Activated T-helper 1 cell treated with anti-CD3 and anti-CD28 coated beads, Interleukin-12 subunit alpha, Interleukin-12 subunit beta, Interleukin-2, Interleukin-4 antibody, amounts not matched to agents 30 ng/mL and 10 ng/mL and 1 ng/mL, durations not matched to agents 14 hours and 24 hours and 36 hours (primary cell): ENCODE measurements at regions of chr11 and their contacts with region 1.

Region 1: DNA sequence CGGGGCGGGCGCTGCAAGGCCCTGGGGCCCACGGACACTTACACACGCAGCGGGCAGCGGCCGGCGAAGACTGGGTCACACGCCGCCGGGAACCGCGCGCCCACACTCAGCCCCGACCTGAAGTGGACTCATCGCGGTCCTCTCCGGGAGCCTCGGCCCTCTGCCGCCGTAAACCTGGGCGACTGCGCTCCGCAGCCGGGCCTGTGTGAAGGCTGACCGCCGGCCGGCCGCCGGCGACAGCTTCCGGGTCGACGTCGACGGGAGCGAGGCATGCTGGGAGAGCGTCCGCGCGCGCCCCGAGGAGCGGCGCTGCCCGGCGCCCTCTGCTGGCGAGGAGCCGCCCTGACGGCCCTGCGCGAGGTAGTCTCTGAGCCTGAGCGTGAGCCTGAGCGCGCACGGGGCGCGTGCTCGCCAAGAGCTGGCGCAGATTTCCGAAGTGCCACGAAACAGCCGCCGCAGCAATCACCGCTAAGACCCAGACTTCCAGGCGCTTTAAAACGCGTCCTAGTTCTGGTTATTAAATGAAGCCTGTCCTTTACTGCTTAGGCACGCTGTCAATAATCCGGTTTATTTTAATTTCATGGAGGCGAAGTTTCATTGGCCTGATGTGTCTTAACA is at the start of gene SNX19:
- DNase-seq: peak; percentile 90
- H3K4me3 Mint-ChIP-seq: peak within 1 kb of the TSS; percentile 87
- H3K27ac Mint-ChIP-seq: peak within 1 kb of the TSS; percentile 63
- H3K4me1 Mint-ChIP-seq: peaks cover 33% of the 10 kb centered on the region
- H3K27me3 Mint-ChIP-seq: peaks cover 8% of the 10 kb centered on the region
- total RNA-seq, gene SNX19: 58.5 and 60.7 TPM in 2 replicates

Region 2: GRCh38 chr11:129279326-129280026 is 1636.9 kb before region 1 on chr11:
- intact Hi-C with region 1: loop called (anchors 2 kb)
- DNase-seq: peak; percentile 74
- H3K4me3 Mint-ChIP-seq: peak overlapping the region; percentile 79
- H3K27ac Mint-ChIP-seq: peak overlapping the region; percentile 81
- H3K4me1 Mint-ChIP-seq: peaks cover 40% of the 10 kb centered on the region
- H3K27me3 Mint-ChIP-seq: peaks cover 29% of the 10 kb centered on the region

Region 3: DNA sequence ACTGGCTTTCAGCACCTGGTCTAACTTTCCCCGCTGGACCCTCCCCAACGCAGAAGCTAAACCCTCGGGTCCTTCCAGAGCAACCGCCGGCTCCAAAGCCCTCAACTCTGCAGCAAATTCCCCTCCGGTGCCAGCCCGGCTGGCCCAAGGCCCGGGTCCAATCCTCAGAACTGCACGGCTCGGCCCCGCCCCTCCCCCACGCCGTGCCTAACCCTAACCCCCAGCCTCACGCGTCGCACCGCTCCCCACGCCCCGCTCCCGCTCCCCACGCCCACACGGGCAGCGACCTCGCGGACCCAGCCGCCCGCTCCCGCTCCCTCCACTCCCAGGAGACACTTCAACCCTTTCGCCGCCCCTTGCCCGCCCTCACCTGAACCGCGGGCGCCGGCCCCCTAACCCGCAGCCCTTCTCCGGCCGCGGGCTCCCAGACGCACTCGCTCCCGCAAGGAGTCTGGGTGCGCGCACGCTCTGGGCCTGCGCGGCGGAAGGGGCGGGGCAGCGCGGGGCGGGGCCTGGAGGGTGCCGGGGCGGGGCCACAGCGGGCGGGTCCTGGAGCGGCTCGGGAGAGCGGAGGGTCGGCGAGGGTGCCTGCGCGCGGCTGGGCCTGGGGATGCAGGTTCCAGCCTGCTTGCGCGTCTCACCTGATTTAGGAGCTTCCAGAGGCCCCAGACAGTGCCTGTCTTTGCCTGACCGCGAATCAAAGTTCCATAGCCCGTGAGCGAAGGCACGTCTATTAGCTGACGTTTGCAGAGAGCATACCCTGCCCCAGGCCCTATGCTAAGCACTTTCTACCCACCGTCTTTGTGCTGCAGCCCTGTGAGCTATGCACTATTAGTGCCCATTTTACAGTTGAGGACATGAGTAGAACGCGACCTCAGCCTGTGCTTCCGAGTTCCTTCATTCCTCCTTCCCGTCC is 1021.0 kb before region 1 on chr11 and contains the start of gene NFRKB:
- intact Hi-C with region 1: loop called (anchors 2 kb)
- DNase-seq: peak; percentile 84
- H3K4me3 Mint-ChIP-seq: peak within 1 kb of the TSS; percentile 92
- H3K27ac Mint-ChIP-seq: peak within 1 kb of the TSS; percentile 84
- H3K4me1 Mint-ChIP-seq: peaks cover 41% of the 10 kb centered on the region
- H3K27me3 Mint-ChIP-seq: peaks cover 5% of the 10 kb centered on the region
- total RNA-seq, gene NFRKB: 46.8 and 48.5 TPM in 2 replicates

Region 4: DNA sequence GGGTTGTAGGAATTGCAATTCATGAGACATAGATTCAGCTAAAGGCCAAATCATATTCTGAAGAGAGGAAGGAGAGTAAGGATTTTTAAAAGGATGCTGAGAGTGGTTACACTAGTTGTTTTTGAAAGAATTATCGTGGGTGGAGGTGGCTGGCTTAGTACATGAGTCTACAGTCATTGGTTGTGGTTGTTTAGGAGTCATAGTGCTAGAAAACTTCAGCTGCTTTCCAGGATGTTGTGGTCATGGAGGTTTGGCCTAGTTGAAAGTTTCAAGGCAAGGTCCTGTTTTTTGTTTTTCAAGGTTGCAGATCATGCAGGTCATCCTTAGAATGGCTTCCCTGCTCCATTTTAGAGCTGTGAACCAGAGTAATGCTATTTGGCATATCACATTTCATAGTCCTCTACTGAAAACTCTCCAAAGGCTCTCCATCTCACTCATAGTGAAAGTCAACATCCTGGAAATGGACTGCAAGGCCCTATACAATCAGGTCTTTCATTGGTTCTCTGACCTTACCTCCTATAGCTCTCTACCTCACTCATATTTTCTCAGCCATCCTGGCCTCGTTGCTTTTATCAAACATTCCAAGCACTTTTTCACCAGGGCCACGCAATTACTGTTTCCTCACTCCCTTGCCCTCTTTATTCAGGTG is 575.6 kb before region 1 on chr11:
- intact Hi-C with region 1: loop called (anchors 1 kb)
- DNase-seq: peak; percentile 59
- H3K4me3 Mint-ChIP-seq: no peak overlapping the region
- H3K27ac Mint-ChIP-seq: peak overlapping the region; percentile 83
- H3K4me1 Mint-ChIP-seq: peaks cover 25% of the 10 kb centered on the region
- H3K27me3 Mint-ChIP-seq: no peaks in the 10 kb centered on the region

Region 5: GRCh38 chr11:130636722-130637517 is 279.4 kb before region 1 on chr11:
- intact Hi-C with region 1: loop called (anchors 10 kb)
- DNase-seq: no peak
- H3K4me3 Mint-ChIP-seq: peak overlapping the region; percentile 0
- H3K27ac Mint-ChIP-seq: peak overlapping the region; percentile 25
- H3K4me1 Mint-ChIP-seq: peaks cover 52% of the 10 kb centered on the region
- H3K27me3 Mint-ChIP-seq: no peaks in the 10 kb centered on the region

Region 6: DNA sequence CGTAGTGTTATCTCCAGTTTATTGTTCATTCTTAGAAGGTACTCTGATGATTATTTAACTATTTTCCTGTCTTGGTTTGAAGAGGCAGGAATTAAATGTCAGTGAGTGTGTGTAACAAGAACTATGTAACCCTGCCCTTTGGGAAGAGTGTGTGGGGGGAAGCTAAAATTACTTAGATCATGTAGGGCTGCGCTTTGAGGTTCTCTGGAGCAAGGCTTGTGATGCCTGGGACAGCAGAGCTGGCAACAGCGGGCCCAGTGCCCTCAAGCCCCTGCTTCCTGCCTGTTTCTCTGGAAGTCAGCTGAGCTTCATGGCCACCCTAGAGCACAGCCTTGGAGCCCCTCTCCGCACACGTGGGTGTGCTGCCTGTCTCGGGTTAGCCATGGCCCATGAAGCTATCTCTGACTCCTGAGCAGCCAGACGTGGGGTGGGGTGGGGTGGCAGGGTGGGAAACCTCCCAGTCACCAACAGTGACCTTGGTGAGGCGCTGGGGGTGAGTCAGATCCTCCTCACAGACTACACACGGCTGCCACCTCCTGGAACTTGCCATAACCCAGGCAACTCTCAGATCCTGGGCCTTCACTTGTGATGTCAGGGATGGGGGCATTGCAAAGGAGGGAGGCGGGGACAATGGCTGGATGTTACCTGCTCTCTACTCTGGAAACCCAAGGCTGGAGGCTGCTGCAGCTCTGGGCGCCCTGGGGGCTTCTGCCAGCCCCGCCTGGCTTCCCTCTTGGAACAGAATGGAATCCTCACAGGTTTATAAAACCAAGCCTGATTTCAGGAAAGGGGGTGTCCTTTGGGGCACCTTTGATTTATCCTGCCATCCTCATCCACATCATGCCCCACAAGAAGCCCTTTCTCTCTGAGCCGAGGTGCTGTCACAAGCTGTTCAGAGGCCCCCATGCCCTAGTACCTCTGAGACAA is 88.6 kb before region 1 on chr11:
- intact Hi-C with region 1: no loop called
- DNase-seq: no peak
- H3K4me3 Mint-ChIP-seq: no peak overlapping the region
- H3K27ac Mint-ChIP-seq: no peak overlapping the region
- H3K4me1 Mint-ChIP-seq: no peaks in the 10 kb centered on the region
- H3K27me3 Mint-ChIP-seq: peaks cover 2% of the 10 kb centered on the region

Region 7: DNA sequence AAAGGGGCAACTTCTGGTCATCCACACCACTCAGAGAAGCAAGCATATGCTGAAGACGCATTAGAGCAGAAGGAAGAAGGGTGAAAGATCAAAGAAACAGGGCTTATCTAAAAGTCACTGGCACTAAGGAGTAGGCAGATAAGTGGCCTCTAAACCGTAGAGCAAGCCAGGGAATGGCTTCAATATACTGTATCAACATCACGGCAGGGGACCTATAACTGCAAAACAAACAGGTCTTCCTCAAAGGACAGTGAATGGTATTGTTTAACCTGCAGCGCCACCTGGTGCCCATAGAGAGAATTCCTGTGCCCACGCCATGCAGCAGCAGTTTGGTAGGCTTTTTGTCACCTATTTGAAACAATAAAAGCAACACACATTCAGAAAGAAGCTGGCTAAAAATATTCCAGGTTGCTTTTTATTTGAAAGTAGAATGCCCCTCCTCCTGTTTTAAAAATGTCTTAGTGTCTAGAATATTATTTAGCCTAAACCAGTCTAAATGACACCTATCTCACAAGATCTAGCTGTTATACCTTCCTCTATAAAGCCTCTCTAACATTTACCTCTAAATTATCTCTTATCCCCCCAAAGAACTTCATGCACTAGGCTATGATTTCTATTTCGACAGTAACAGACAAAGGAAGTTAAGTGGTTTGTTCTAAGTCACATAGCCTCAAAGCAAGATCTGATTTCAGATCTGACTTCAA is 21.9 kb before region 1 on chr11:
- intact Hi-C with region 1: loop called (anchors 1 kb)
- DNase-seq: peak; percentile 46
- H3K4me3 Mint-ChIP-seq: no peak overlapping the region
- H3K27ac Mint-ChIP-seq: no peak overlapping the region
- H3K4me1 Mint-ChIP-seq: no peaks in the 10 kb centered on the region
- H3K27me3 Mint-ChIP-seq: no peaks in the 10 kb centered on the region

Region 8: GRCh38 chr11:130964058-130964792 is 47.9 kb after region 1 on chr11:
- intact Hi-C with region 1: no loop called
- DNase-seq: no peak
- H3K4me3 Mint-ChIP-seq: no peak overlapping the region
- H3K27ac Mint-ChIP-seq: no peak overlapping the region
- H3K4me1 Mint-ChIP-seq: no peaks in the 10 kb centered on the region
- H3K27me3 Mint-ChIP-seq: no peaks in the 10 kb centered on the region